Right ventricle myocardium superior (tissue), 1 donor: ENCODE measurements at regions of chr11 and their contacts with region 1.

Region 1: GRCh38 chr11:46889689-46890475 is 28.5 kb downstream of the LRP4 start:
- DNase-seq: no peak
- ATAC-seq: peak; percentile 88

Region 2: GRCh38 chr11:47152953-47153950 is 263.4 kb after region 1 on chr11:
- intact Hi-C with region 1: loop called (anchors 2 kb)
- DNase-seq: peak; percentile 86
- ATAC-seq: peak; percentile 89